ENCODE measurements at regions of chr2 and their contacts with region 1.

Region 1: GRCh38 chr2:10812362-10813162 is at the start of gene PDIA6:
- DNase-seq: peak; percentile 95
- H3K4me3 ChIP-seq: peak within 1 kb of the TSS; percentile 63 to 76 (median 67)
- H3K27ac ChIP-seq: peak within 1 kb of the TSS; percentile 66
- H3K4me1 ChIP-seq: peaks cover 14% of the 10 kb centered on the region
- H3K27me3 ChIP-seq: no peaks in the 10 kb centered on the region
- CTCF ChIP-seq: no peak
- total RNA-seq, gene PDIA6: 168 to 256 TPM

Region 2: DNA sequence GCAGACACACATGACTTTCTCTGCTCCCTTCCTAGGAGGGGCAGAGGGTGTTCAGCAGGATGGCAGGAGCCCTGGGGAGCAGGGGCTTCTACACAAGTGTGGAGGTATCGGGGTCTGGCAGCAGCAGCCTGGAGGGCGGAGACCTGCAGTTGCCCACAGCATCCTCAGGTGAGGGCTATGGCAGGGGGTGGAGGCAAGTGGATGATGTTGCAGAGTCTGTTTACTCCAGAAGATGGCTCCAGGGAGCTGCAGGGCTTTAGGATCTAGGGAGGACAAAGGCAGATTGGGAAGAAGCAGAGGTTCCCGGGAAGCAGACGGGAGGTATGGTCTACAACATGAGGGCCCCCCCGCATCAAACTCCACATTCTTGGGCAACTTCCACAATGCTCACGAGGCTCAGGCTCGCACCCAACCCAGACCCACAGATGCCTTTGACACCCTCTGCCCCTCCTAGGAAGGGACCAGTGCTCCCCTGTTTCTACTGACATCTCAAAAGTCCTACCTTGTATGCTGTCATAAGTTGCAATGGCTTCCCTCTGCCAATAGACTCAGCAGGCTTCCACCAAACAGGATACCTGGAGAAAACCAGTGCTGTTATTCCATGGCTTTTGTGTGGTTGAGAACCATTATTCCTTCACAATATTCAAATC is 103.1 kb before region 1 on chr2:
- CTCF ChIA-PET with region 1: no interaction called
- dilution Hi-C with region 1: no loop called
- in situ Hi-C with region 1: no loop called
- intact Hi-C with region 1: loop called (anchors 1 kb)
- DNase-seq: peak; percentile 44
- H3K4me3 ChIP-seq: no peak overlapping the region
- H3K27ac ChIP-seq: no peak overlapping the region
- H3K4me1 ChIP-seq: peaks cover 6% of the 10 kb centered on the region
- H3K27me3 ChIP-seq: no peaks in the 10 kb centered on the region
- CTCF ChIP-seq: peak; percentile 64 to 83